Mammary epithelial cell (primary cell): ENCODE measurements at regions of chr1 and their contacts with region 1.

Region 1: GRCh38 chr1:234065794-234066447 is 161.4 kb downstream of the SLC35F3 start:
- DNase-seq: peak; percentile 58
- H3K4me3 ChIP-seq: no peak overlapping the region
- H3K27ac ChIP-seq: peak overlapping the region; percentile 18
- H3K4me1 ChIP-seq: peaks cover 10% of the 10 kb centered on the region
- H3K27me3 ChIP-seq: no peaks in the 10 kb centered on the region
- CTCF ChIP-seq: peak; percentile 76 to 90

Region 2: DNA sequence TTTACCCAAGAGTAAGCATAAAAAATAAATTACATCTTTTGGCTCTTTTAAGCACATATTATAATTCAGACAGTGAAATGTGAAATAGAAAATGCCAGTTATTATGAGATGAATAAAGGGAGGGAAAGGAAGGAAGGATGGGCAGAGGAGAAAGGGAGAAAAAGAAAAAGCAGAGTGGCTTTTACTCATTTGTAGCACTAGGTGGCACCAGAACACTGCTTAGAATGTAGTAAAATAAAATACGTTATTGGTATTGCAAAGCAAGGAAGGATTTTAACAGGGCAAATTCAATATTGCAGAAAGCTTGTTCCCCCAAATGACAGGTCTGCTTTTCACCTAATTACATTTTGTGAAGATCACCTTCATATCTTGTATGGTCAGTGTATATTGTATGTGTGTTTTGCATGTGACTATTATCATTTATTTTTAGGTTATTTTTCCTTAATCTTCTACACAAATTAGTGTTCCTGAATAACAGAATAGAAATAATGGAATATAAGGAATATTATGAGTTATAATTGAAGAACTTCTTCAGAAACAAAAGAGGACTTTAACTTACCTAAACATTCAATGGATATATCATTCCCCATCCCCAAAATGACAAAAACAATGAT is 761.3 kb before region 1 on chr1:
- CTCF ChIA-PET with region 1: no interaction called
- dilution Hi-C with region 1: no loop called
- in situ Hi-C with region 1: no loop called
- intact Hi-C with region 1: loop called (anchors 1 kb)
- DNase-seq: peak; percentile 17
- H3K4me3 ChIP-seq: no peak overlapping the region
- H3K27ac ChIP-seq: no peak overlapping the region
- H3K4me1 ChIP-seq: no peaks in the 10 kb centered on the region
- H3K27me3 ChIP-seq: peaks cover 2% of the 10 kb centered on the region
- CTCF ChIP-seq: peak; percentile 77 to 80

Region 3: GRCh38 chr1:233440951-233441401 is 624.9 kb before region 1 on chr1:
- CTCF ChIA-PET with region 1: no interaction called
- dilution Hi-C with region 1: no loop called
- in situ Hi-C with region 1: loop called (anchors 25 kb)
- intact Hi-C with region 1: loop called (anchors 1 kb)
- DNase-seq: peak; percentile 58
- H3K4me3 ChIP-seq: no peak overlapping the region
- H3K27ac ChIP-seq: no peak overlapping the region
- H3K4me1 ChIP-seq: peaks cover 8% of the 10 kb centered on the region
- H3K27me3 ChIP-seq: no peaks in the 10 kb centered on the region
- CTCF ChIP-seq: peak; percentile 64 to 75

Region 4: GRCh38 chr1:233613252-233614174 is 452.4 kb before region 1 on chr1 and contains the start of gene KCNK1:
- CTCF ChIA-PET with region 1: no interaction called
- dilution Hi-C with region 1: no loop called
- in situ Hi-C with region 1: no loop called
- intact Hi-C with region 1: loop called (anchors 10 kb)
- DNase-seq: peak; percentile 90
- H3K4me3 ChIP-seq: peak within 1 kb of the TSS; percentile 66 to 97 (median 83)
- H3K27ac ChIP-seq: peak within 1 kb of the TSS; percentile 87
- H3K4me1 ChIP-seq: peaks cover 6% of the 10 kb centered on the region
- H3K27me3 ChIP-seq: no peaks in the 10 kb centered on the region
- CTCF ChIP-seq: no peak
- total RNA-seq, gene KCNK1: 9.0 to 20.6 TPM

Region 5: DNA sequence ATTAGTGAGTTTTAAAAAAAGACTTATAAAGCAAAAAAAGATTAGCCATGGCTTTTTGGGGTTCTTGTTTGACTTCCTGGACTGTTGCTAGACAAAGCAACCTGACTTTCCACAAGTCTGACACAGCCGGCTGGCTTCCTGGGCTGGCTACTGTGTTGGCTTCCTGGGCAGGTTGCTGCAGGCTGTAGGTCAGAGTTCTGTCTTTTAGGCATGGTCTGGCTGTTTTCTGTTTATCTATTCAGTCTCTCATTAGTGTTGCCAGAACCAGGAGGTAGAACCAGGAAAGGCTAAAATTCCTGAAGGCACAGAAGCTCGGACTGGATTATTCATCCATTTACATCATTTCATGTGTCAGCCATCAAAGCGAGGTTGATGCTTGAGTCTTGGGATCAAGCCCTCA is 250.1 kb before region 1 on chr1:
- CTCF ChIA-PET with region 1: no interaction called
- dilution Hi-C with region 1: loop called (anchors 25 kb)
- in situ Hi-C with region 1: no loop called
- intact Hi-C with region 1: no loop called
- DNase-seq: peak; percentile 25
- H3K4me3 ChIP-seq: no peak overlapping the region
- H3K27ac ChIP-seq: no peak overlapping the region
- H3K4me1 ChIP-seq: no peaks in the 10 kb centered on the region
- H3K27me3 ChIP-seq: peaks cover 18% of the 10 kb centered on the region
- CTCF ChIP-seq: no peak

Region 6: DNA sequence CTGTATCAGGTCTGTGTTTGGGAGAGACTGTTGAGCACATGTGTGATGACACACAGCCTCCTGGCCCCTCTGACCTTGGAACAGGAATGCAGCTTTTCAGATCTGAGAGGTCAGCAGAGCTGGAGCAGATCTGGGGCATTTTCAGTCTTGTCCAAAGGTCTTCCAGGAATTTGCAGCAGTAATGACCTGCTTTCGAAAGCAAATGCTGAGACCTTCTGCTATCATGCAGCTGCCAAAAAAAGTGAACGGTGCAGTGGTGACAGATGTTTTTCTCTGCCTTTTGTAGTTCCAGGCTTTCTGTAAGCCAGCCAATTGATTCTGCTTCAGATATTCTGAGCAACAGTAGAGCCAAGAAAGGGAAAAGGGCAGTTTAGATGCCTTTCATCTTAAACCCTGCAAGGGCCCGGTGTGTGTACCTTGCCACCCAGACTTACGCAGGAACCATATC is 169.5 kb after region 1 on chr1:
- CTCF ChIA-PET with region 1: no interaction called
- dilution Hi-C with region 1: no loop called
- in situ Hi-C with region 1: no loop called
- intact Hi-C with region 1: no loop called
- DNase-seq: no peak
- H3K4me3 ChIP-seq: no peak overlapping the region
- H3K27ac ChIP-seq: no peak overlapping the region
- H3K4me1 ChIP-seq: peaks cover 4% of the 10 kb centered on the region
- H3K27me3 ChIP-seq: no peaks in the 10 kb centered on the region
- CTCF ChIP-seq: no peak

Region 7: GRCh38 chr1:234355782-234356510 is 290.0 kb after region 1 on chr1:
- CTCF ChIA-PET with region 1: no interaction called
- dilution Hi-C with region 1: no loop called
- in situ Hi-C with region 1: no loop called
- intact Hi-C with region 1: no loop called
- DNase-seq: no peak
- H3K4me3 ChIP-seq: peak overlapping the region in 2 of 3 experiments; percentile 41 to 63
- H3K27ac ChIP-seq: no peak overlapping the region
- H3K4me1 ChIP-seq: no peaks in the 10 kb centered on the region
- H3K27me3 ChIP-seq: no peaks in the 10 kb centered on the region
- CTCF ChIP-seq: no peak